Activated CD4-positive, alpha-beta T cell treated with anti-CD3 and anti-CD28 coated beads for 36 hours (primary cell): ENCODE measurements at regions of chr11 and their contacts with region 1.

Region 1: GRCh38 chr11:107573438-107573837 is 7.9 kb upstream of the ALKBH8 start:
- DNase-seq: no peak
- ATAC-seq: no peak
- H3K4me3 Mint-ChIP-seq: no peak overlapping the region
- H3K27ac Mint-ChIP-seq: no peak overlapping the region
- H3K4me1 Mint-ChIP-seq: no peaks in the 10 kb centered on the region
- H3K27me3 Mint-ChIP-seq: peaks cover 2% of the 10 kb centered on the region

Region 2: GRCh38 chr11:107549253-107549953 is 24.0 kb before region 1 on chr11:
- CTCF ChIA-PET with region 1: interaction called, 4 read pairs
- POLR2A ChIA-PET with region 1: no interaction called
- intact Hi-C with region 1: loop called in 1 of 2 experiments (anchors 1 kb)
- DNase-seq: peak; percentile 45
- ATAC-seq: peak; percentile 65
- H3K4me3 Mint-ChIP-seq: no peak overlapping the region
- H3K27ac Mint-ChIP-seq: no peak overlapping the region
- H3K4me1 Mint-ChIP-seq: peaks cover 11% of the 10 kb centered on the region
- H3K27me3 Mint-ChIP-seq: no peaks in the 10 kb centered on the region

Region 3: GRCh38 chr11:107689317-107690202 is 116.1 kb after region 1 on chr11:
- CTCF ChIA-PET with region 1: interaction called, 49 read pairs
- POLR2A ChIA-PET with region 1: no interaction called
- intact Hi-C with region 1: loop called (anchors 1 kb)
- DNase-seq: peak; percentile 77
- ATAC-seq: peak; percentile 73
- H3K4me3 Mint-ChIP-seq: no peak overlapping the region
- H3K27ac Mint-ChIP-seq: no peak overlapping the region
- H3K4me1 Mint-ChIP-seq: no peaks in the 10 kb centered on the region
- H3K27me3 Mint-ChIP-seq: peaks cover 6% of the 10 kb centered on the region

Region 4: GRCh38 chr11:107770551-107770951 is 197.1 kb after region 1 on chr11:
- CTCF ChIA-PET with region 1: interaction called, 3 read pairs
- POLR2A ChIA-PET with region 1: no interaction called
- intact Hi-C with region 1: loop called (anchors 1 to 2 kb)
- DNase-seq: no peak
- ATAC-seq: peak; percentile 35
- H3K4me3 Mint-ChIP-seq: no peak overlapping the region
- H3K27ac Mint-ChIP-seq: no peak overlapping the region
- H3K4me1 Mint-ChIP-seq: peaks cover 9% of the 10 kb centered on the region
- H3K27me3 Mint-ChIP-seq: peaks cover 6% of the 10 kb centered on the region

Region 5: DNA sequence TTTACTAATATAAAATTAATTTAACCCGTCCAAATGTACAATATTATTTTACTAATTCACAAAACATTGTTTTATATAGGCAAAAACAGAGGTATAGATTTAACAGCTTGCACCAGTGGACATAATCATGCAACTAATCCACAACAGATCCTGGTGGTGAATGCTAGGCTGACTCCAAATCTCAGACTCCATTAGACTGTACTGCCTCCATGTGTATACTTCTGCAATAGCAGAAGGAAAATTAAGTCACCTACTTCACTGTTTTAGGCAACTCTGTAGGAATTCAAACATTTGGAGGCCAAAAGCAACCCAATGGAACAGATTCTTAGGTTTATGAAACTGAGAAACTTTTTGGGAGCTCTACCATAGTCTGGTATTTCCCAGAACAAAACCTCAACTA is 324.8 kb after region 1 on chr11:
- CTCF ChIA-PET with region 1: interaction called, 3 read pairs
- POLR2A ChIA-PET with region 1: no interaction called
- intact Hi-C with region 1: loop called (anchors 1 to 5 kb)
- DNase-seq: no peak
- ATAC-seq: peak; percentile 81
- H3K4me3 Mint-ChIP-seq: no peak overlapping the region
- H3K27ac Mint-ChIP-seq: no peak overlapping the region
- H3K4me1 Mint-ChIP-seq: no peaks in the 10 kb centered on the region
- H3K27me3 Mint-ChIP-seq: peaks cover 5% of the 10 kb centered on the region